Mammary epithelial cell (primary cell): ENCODE measurements at regions of chr7 and their contacts with region 1.

Region 1: DNA sequence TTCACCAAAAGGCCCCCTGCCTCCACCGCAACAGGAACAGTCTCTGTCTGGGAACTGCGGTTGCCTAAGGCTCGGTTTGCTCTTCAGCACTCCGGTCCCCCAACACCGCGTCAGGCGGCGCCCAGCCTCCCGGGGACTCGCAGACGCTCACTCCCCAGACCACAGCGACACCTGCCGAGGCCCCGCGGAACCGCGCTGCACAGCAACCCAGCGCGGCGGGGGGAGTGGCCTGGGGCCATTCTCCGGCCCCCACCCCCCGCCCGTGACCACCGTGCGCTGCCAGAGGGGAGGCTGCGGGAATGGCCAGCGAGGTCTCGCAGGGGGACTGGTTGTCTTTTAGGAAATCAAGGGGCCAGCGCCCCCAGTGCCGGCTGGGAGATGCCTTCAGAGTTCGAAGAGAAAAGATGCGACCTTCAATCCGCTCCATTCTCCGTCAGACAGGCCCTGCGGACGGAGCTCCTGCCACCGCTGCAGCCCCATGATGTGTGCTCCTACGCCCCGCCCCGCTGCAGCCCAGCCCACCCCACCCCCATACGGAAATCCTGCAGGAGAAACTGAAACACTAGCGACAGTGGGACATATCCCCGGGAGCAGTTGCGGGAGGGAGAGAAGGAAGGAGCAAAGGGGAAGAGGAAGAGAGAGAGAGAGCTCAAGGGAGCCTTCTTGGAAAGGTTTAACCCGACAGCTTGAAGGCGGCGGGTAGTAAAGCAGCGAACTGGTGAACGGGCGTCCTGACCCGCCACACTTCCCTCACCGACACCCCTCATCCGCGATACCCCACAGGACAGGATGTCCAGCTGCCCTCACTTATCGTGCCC is 137.4 kb upstream of the CDCA7L start:
- DNase-seq: peak; percentile 70
- H3K4me3 ChIP-seq: peak overlapping the region; percentile 51 to 73 (median 70)
- H3K27ac ChIP-seq: no peak overlapping the region
- H3K4me1 ChIP-seq: peaks cover 6% of the 10 kb centered on the region
- H3K27me3 ChIP-seq: no peaks in the 10 kb centered on the region
- CTCF ChIP-seq: peak; percentile 67 to 97

Region 2: DNA sequence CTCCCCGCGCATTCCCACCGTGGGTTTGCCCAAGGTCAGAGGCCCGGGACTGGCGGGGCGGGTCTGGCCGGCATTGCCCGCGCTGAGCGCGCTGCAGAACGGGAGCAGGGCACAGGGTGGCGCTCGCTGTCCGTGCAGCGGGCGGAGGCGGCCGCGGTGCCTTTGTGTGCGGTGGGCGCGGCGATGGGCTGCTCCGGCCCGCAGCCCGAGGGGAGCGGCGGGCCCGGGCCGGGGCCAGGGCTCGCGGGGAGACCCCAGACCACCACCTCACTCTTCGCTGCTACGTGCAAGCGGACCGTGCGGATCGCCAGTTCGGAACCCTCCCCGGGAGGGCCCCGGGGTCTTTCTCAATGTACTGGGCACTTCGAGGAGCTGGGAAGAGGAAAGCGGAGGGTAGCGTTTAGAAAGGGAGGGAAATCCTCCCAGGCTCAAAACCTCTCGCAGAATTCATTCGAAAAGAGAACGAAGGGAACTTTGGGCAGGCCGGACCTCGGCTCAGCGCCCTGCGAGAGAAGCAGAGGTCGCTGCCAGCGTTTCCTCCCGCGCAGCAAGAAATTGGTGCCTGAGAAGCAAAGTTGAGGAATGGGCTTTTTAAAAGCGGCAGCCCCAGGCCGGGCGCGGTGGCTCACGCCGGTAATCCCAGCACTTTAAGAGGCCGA is 1304.9 kb before region 1 on chr7:
- CTCF ChIA-PET with region 1: no interaction called
- dilution Hi-C with region 1: no loop called
- in situ Hi-C with region 1: no loop called
- intact Hi-C with region 1: loop called (anchors 10 kb)
- DNase-seq: peak; percentile 37
- H3K4me3 ChIP-seq: peak overlapping the region; percentile 52 to 77 (median 55)
- H3K27ac ChIP-seq: no peak overlapping the region
- H3K4me1 ChIP-seq: peaks cover 4% of the 10 kb centered on the region
- H3K27me3 ChIP-seq: peaks cover 17% of the 10 kb centered on the region
- CTCF ChIP-seq: peak; percentile 52 to 74

Region 3: DNA sequence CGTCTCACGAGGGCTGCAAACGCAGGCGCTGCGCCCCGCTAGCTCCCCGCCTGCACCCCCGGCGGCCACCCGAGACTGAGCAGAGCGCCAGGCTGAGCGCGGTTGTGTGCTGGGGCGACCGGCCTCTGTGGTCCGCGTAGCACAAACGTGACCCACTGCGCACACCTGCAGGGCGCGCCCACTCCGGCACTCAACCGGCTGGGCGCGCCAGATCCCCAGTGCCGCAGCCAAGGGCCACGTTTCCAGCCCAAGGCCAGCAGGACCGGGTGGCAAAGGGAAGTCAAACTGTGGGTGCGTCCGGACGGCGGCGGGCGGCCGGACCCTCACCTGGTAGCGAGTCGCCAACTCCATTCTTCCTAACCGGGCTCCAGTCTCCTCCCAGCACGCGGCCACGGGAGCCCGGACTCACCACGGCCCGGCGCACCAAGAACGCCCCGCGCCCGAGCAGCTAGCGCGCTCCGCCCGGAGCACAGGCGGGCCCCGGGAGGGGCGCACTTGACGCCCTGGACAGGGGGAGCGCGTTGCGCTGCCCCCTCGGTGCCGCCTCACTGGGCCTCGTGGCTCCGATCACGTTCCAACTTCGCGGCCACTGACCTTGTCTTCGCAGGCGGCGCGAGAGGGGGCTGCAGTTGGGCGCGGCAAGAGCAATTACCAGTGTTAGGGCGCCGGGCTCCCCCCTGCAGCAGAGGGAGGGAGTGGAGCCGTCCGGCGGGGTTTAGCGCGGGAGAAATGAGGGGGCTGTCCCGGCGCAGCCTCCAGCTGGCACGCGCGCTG is 137.5 kb before region 1 on chr7 and contains the start of gene CDCA7L:
- CTCF ChIA-PET with region 1: no interaction called
- dilution Hi-C with region 1: no loop called
- in situ Hi-C with region 1: no loop called
- intact Hi-C with region 1: loop called (anchors 10 kb)
- DNase-seq: peak; percentile 81
- H3K4me3 ChIP-seq: peak within 1 kb of the TSS; percentile 74 to 96 (median 79)
- H3K27ac ChIP-seq: peak within 1 kb of the TSS; percentile 77
- H3K4me1 ChIP-seq: peaks cover 16% of the 10 kb centered on the region
- H3K27me3 ChIP-seq: no peaks in the 10 kb centered on the region
- CTCF ChIP-seq: no peak
- total RNA-seq, gene CDCA7L: 8.5 to 29.8 TPM

Region 4: DNA sequence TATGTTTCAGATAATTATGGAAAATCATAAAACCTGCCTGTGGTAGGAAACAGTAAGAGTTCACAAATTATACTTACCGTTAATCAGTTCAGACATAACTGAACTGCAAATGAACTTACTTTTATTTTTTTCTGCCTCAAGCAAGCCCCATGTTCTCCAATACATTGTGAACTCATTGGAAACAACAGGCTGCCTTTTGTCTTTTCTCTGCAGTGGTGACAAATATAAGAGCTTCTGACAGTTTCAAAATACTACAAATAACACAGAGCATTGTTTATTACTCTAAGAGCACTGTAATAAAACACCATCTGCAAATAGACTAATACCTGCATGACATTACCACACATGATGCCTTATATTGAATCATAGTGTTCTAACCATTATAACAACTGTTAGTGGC is 43.4 kb before region 1 on chr7:
- CTCF ChIA-PET with region 1: interaction called, 10 read pairs
- dilution Hi-C with region 1: no loop called
- in situ Hi-C with region 1: no loop called
- intact Hi-C with region 1: no loop called
- DNase-seq: no peak
- H3K4me3 ChIP-seq: no peak overlapping the region
- H3K27ac ChIP-seq: no peak overlapping the region
- H3K4me1 ChIP-seq: no peaks in the 10 kb centered on the region
- H3K27me3 ChIP-seq: no peaks in the 10 kb centered on the region
- CTCF ChIP-seq: no peak